AG04450 (cell line): ENCODE measurements at regions of chr9 and their contacts with region 1.

Region 1: GRCh38 chr9:2837915-2838314 is 6.0 kb downstream of the PUM3 start:
- DNase-seq: no peak
- H3K4me3 ChIP-seq: peak overlapping the region; percentile 38
- H3K27ac ChIP-seq: no peak overlapping the region
- H3K27me3 ChIP-seq: no peaks in the 10 kb centered on the region
- CTCF ChIP-seq: no peak; the same call in 1 of the 2 replicates

Region 2: GRCh38 chr9:2923766-2924379 is 86.0 kb after region 1 on chr9:
- CTCF ChIA-PET with region 1: no interaction called
- POLR2A ChIA-PET with region 1: interaction called, 10 read pairs
- DNase-seq: no peak
- H3K4me3 ChIP-seq: no peak overlapping the region
- H3K27ac ChIP-seq: no peak overlapping the region
- H3K27me3 ChIP-seq: no peaks in the 10 kb centered on the region
- CTCF ChIP-seq: no peak

Region 3: DNA sequence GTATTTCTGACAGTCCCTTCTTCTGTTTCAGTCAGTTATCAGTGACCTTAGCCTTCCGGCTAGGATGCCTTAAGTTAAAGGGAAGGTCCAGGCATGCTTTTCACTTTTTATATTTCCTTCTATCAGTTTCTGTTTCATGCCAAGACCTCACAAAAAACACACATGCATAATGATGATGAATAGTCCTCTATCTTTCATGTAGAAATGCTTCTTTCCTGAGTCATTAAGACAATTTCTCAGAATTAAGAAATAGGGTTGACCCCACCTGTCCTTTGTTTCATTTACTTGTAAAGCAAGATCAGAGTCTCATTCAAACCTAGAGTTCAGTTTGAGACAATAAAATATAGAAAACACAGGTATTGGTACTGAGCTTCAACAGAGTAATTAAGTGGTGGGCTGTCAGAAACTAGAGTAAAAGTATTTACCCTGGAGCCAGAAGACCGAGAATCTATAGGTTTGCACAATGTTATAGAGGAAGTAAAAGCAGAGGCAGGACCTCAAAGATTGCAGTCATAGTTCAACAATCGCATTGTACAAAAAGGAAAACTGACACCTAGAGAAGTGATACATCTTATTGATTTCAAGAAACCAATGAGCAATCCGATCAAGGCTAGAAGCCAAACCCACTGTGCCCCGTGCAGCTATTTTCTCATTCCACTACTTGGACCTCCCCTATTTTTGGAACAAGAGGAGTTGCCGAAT is 124.7 kb after region 1 on chr9:
- CTCF ChIA-PET with region 1: no interaction called
- POLR2A ChIA-PET with region 1: no interaction called
- DNase-seq: no peak
- H3K4me3 ChIP-seq: no peak overlapping the region
- H3K27ac ChIP-seq: no peak overlapping the region
- H3K27me3 ChIP-seq: no peaks in the 10 kb centered on the region
- CTCF ChIP-seq: no peak

Region 4: GRCh38 chr9:3458806-3459475 is 621.0 kb after region 1 on chr9:
- CTCF ChIA-PET with region 1: interaction called, 10 read pairs
- POLR2A ChIA-PET with region 1: no interaction called
- DNase-seq: no peak
- H3K4me3 ChIP-seq: no peak overlapping the region
- H3K27ac ChIP-seq: no peak overlapping the region
- H3K27me3 ChIP-seq: no peaks in the 10 kb centered on the region
- CTCF ChIP-seq: no peak